ENCODE measurements at regions of chr14 and their contacts with region 1.

Region 1: GRCh38 chr14:77763978-77764377 is 3.0 kb upstream of the SNW1 start:
- DNase-seq: no peak
- ATAC-seq: no peak
- H3K4me3 ChIP-seq: no peak overlapping the region
- H3K27ac ChIP-seq: no peak overlapping the region
- H3K4me1 ChIP-seq: peaks cover 2% of the 10 kb centered on the region
- H3K27me3 ChIP-seq: no peaks in the 10 kb centered on the region

Region 2: GRCh38 chr14:77799863-77800730 is 36.1 kb after region 1 on chr14 and contains the start of gene ADCK1:
- intact Hi-C with region 1: loop called in 1 of 4 experiments (anchors 2 kb)
- DNase-seq: peak; percentile 93 to 97 (median 96)
- ATAC-seq: peak; percentile 97 to 98
- H3K4me3 ChIP-seq: peak within 1 kb of the TSS; percentile 58
- H3K27ac ChIP-seq: peak within 1 kb of the TSS; percentile 86
- H3K4me1 ChIP-seq: no peaks in the 10 kb centered on the region
- H3K27me3 ChIP-seq: no peaks in the 10 kb centered on the region
- total RNA-seq, gene ADCK1: 5.5 to 11.8 (median 9.8) TPM